Adrenal gland (tissue), 19 donors: ENCODE measurements at regions of chr17 and their contacts with region 1.

Region 1: DNA sequence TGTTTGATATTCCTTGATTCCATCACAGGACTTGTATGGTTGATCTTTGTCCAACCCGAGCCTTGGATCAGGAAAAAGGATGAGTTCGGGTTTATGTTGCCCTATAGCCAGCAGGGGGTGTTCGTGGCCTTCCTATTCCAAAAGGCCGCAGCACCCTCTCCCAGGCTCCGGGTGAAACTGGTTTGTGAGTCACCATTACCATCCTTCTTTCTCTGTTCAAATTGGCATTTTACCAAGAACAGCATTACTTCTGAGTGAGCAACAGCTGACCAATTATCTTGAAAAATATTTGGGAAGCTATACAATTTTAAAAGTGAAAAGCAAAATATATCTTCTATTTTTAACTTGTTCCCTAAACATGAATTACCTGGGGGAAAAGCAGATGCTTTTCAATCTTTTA is 24.3 kb upstream of the KRT20 start:
- DNase-seq: peak; percentile 76 to 94 (median 90)
- H3K4me3 ChIP-seq: no peak overlapping the region
- H3K27ac ChIP-seq: no peak overlapping the region
- H3K4me1 ChIP-seq: peaks cover 0 to 9% of the 10 kb centered on the region in 2 donors
- H3K27me3 ChIP-seq: peaks cover 8% of the 10 kb centered on the region
- CTCF ChIP-seq: peak; percentile 58 to 96 (median 80)
- POLR2A ChIP-seq: no peak

Region 2: DNA sequence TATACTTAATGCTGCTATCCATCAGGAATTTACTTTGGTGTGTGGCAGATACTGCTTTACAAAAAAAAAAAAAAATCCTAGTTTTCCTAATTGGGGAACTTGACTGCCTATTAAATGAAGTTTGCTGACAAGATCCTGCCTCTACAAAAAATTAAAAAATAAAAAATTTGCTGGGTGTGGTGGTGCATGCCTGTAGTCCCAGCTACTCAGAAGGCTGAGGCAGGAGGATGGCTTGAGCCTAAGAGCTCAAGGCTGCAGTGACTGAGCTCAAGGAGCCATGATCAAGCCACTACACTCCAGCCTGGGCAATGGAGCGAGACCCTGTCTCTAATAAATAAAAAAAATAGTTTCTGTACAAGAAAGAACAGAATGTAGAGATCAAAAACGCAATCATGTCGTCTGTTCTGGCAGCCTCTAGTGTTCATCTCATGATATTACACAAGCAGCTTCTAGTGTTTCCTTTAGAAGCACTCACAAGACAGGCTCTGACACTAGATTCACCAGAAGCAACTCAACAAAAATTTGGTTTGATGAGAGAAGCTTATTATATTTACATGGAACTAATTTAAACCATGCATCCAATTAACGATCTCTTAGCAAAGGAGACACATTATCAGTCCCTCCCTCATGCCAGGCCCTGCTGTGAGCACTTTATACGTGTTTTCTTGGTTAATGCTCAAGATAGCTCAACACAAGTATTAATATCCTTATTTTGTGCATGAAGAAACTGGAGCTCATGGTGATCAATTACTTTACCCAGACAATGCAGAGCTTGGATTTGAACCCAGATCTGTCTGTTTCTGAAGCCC is 412.9 kb after region 1 on chr17:
- intact Hi-C with region 1: loop called (anchors 5 to 10 kb)
- DNase-seq: peak in 1 of 7 donors; percentile 23
- H3K4me3 ChIP-seq: no peak overlapping the region
- H3K27ac ChIP-seq: no peak overlapping the region
- H3K4me1 ChIP-seq: no peaks in the 10 kb centered on the region
- H3K27me3 ChIP-seq: no peaks in the 10 kb centered on the region
- CTCF ChIP-seq: peak; percentile 57 to 75 (median 72)
- POLR2A ChIP-seq: no peak

Region 3: GRCh38 chr17:41548844-41549595 is 639.7 kb after region 1 on chr17:
- intact Hi-C with region 1: loop called in 1 of 2 experiments (anchors 5 kb)
- DNase-seq: peak; percentile 79 to 93 (median 84)
- H3K4me3 ChIP-seq: peak overlapping the region in 1 of 4 donors; percentile 26
- H3K27ac ChIP-seq: peak overlapping the region in 3 of 5 donors; percentile 37 to 72 (median 57)
- H3K4me1 ChIP-seq: peaks cover 15 to 19% of the 10 kb centered on the region in 2 donors
- H3K27me3 ChIP-seq: no peaks in the 10 kb centered on the region
- CTCF ChIP-seq: peak; percentile 61 to 96 (median 84)
- POLR2A ChIP-seq: no peak

Region 4: DNA sequence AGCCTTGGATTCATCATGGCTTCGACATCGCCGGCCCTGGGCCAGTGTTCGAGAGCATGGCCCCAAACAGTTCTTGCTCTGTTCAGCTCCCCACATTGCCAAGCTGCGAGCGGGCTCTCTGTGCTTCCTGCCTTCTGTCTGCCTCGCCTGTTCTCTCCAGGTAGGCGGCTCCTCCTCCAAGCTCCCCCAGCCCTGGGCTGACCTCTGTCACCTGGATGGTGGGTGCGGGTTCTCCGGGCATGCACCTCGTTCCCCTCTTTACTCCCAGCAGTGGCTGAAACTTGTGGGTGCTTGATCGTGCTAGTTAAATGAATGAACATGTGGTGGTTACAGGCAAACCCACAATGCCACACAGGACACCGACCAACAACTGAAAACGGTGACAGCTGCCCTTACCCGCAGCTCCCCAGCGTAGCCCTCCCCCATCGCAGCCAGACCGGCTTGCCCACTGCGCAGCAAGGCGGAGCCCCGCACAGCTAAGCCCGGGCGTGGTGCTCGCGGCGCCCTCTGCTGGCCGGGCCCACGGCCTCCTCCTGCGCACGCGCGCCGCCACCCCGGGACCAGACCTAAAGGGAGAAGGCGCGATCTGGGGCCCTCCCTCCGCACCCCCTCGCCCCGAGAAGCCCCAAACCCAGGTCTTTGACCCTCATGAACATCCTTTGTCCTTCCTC is 756.4 kb after region 1 on chr17:
- intact Hi-C with region 1: loop called in 1 of 2 experiments (anchors 5 kb)
- DNase-seq: peak; percentile 86 to 91 (median 88)
- H3K4me3 ChIP-seq: peak overlapping the region in 2 of 4 donors; percentile 37 to 52
- H3K27ac ChIP-seq: peak overlapping the region; percentile 31 to 89 (median 68)
- H3K4me1 ChIP-seq: peaks cover 13 to 18% of the 10 kb centered on the region in 2 donors
- H3K27me3 ChIP-seq: no peaks in the 10 kb centered on the region
- CTCF ChIP-seq: peak; percentile 75 to 94 (median 88)
- POLR2A ChIP-seq: peak; percentile 29 to 69